ENCODE measurements at regions of chr13 and their contacts with region 1.

Region 1: GRCh38 chr13:44435142-44435982 is 61.7 kb downstream of the SERP2 start:
- DNase-seq: peak; percentile 96
- H3K4me3 ChIP-seq: peak overlapping the region; percentile 38 to 77 (median 54)
- H3K27ac ChIP-seq: peak overlapping the region; percentile 56 to 90 (median 86)
- H3K4me1 ChIP-seq: peaks cover 13 to 58% (median 38%) of the 10 kb centered on the region in 6 donors
- H3K27me3 ChIP-seq: peaks cover 0 to 21% (median 0%) of the 10 kb centered on the region in 7 donors
- CTCF ChIP-seq: no peak
- POLR2A ChIP-seq: peak in 1 of 3 donors; percentile 38

Region 2: DNA sequence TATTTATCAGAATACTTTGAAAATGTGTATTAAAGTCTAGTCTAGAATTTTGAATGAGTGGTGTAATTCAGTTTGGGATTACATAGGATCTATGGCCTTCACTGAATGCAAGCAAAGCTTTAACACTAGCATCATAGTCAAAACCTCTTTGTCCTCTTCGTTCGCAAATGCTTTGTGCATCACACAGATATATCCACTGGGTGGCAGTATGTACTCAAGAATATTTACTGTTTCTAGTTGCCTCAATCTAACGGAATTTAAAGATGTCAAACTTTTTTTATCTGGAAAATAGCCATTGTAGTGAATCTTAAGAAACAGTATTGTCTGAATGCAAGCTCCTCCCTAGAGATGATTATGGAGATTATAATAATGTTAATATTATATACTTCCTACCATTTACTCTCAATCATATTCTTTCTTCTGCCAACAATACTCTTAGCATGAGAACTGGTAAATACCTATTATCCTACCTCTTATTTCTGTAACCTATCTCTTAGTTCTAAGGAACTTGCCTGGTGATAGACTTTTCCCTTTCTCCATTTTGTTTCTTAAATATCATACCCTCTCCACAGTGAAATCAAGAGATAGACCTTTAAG is 529.8 kb before region 1 on chr13:
- intact Hi-C with region 1: loop called (anchors 5 kb)
- DNase-seq: no peak
- H3K4me3 ChIP-seq: no peak overlapping the region
- H3K27ac ChIP-seq: no peak overlapping the region
- H3K4me1 ChIP-seq: peaks cover 0 to 7% (median 1%) of the 10 kb centered on the region in 6 donors
- H3K27me3 ChIP-seq: peaks cover 0 to 6% (median 0%) of the 10 kb centered on the region in 7 donors
- CTCF ChIP-seq: peak; percentile 78 to 89 (median 85)
- POLR2A ChIP-seq: no peak

Region 3: DNA sequence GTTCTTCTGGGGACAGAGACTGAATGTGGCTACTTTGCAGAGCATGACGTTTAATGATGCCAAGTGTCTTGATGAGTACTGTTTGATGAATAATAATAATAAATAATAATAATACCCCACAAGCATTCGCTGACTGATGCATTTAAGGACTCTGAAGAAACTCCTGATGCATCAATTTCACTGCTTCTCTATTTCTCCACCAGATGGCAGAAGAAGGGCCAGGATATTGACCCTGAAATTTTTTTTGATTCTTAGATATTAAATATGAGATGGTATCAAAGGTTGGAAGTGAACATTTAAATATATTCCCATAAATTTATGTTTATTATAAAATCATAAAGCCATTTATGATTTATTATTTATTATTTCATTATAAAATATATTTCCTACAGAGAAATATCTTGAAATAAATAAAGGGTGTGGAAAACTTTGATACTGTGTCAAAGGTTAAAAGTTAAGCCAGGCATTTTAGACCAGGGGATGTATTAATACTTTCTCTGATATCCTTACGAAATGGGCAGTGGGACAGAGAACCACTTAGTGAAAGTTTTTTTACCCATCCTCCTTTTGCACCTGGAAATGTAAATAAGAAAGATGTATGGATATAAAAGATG is 384.8 kb before region 1 on chr13:
- intact Hi-C with region 1: loop called (anchors 5 kb)
- DNase-seq: no peak
- H3K4me3 ChIP-seq: no peak overlapping the region
- H3K27ac ChIP-seq: no peak overlapping the region
- H3K4me1 ChIP-seq: peaks cover 0 to 6% (median 0%) of the 10 kb centered on the region in 6 donors
- H3K27me3 ChIP-seq: peaks cover 0 to 10% (median 0%) of the 10 kb centered on the region in 7 donors
- CTCF ChIP-seq: peak; percentile 41 to 80 (median 69)
- POLR2A ChIP-seq: no peak

Region 4: DNA sequence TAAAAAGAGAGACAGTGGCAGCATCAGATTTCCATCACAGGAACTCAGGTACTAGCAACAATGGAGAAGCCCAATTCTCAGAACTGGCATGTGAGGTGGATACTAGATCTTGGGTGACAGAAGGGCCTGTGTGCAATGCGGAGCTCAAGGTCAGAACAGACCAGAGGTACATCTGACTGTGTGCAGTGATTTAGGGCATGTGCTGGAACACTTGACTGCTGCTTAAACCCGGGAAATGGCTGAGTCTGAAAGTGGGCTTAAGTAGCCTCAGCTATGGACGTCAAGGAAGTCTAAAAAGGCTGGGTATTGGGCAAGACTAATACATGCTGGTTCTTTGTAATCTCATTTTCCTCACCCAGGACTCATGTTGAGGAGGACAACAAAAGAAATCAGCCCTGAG is 373.5 kb before region 1 on chr13:
- intact Hi-C with region 1: no loop called
- DNase-seq: no peak
- H3K4me3 ChIP-seq: no peak overlapping the region
- H3K27ac ChIP-seq: no peak overlapping the region
- H3K4me1 ChIP-seq: no peaks in the 10 kb centered on the region
- H3K27me3 ChIP-seq: no peaks in the 10 kb centered on the region
- CTCF ChIP-seq: no peak
- POLR2A ChIP-seq: no peak

Measured in spleen (tissue), 13 donors.